ENCODE measurements at regions of chr11 and their contacts with region 1.

Region 1: DNA sequence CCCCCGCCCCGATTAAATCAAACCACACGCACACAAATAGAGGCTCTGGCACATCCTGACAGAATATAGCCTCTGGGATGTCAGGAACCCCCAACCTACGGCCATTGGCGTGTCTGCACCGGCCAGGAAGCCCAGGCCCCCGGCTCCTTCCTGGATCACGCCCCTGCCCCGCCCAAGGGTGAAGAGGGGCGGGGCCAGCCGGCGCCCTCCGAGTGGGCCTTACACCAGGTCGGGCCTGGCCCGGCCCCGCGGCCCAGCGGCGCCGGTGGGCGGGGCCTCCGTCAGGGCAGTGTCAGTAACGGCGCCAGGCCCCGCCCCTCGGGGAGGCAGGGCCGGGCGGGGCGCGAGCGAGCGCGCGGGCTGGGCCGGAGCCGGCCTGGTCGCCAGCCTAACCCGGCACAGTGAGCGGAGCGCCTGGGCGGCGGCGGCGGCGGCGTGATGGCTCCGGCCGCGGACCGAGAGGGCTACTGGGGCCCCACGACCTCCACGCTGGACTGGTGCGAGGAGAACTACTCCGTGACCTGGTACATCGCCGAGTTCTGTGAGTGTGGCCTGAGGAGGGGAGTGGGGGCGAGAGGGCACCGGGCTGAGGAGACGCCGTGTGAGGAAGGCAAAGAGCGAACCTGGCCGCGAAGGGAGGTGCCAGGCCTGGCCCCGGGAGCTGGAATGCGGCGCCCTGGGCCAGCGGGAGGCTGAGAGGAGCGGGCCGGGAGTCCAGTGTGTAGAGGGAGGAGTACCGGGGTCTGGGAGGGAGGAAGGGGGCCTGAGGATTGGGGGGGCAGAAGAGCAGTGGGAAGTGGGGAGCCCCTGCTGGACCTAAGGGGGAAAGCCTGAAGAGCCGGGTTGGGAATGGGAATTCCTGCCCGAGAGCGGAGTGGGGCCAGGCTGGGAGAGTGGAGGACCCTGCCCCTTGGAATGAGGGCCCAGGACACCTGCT is at the start of gene ACER3:
- DNase-seq: peak; percentile 63
- ATAC-seq: peak; percentile 99
- H3K4me3 ChIP-seq: peak within 1 kb of the TSS; percentile 67 to 71
- H3K27ac ChIP-seq: peak within 1 kb of the TSS; percentile 89
- H3K4me1 ChIP-seq: peaks cover 13% of the 10 kb centered on the region
- H3K27me3 ChIP-seq: no peaks in the 10 kb centered on the region
- CTCF ChIP-seq: peak; percentile 50
- total RNA-seq, gene ACER3: 41.8 TPM

Region 2: GRCh38 chr11:77435972-77436371 is 575.2 kb after region 1 on chr11:
- CTCF ChIA-PET with region 1: interaction called, 11 read pairs
- POLR2A ChIA-PET with region 1: no interaction called
- in situ Hi-C with region 1: no loop called
- intact Hi-C with region 1: no loop called
- DNase-seq: no peak
- ATAC-seq: no peak
- H3K4me3 ChIP-seq: no peak overlapping the region
- H3K27ac ChIP-seq: no peak overlapping the region
- H3K4me1 ChIP-seq: no peaks in the 10 kb centered on the region
- H3K27me3 ChIP-seq: peaks cover 10% of the 10 kb centered on the region; the same call in 1 of the 2 replicates
- CTCF ChIP-seq: no peak